ENCODE measurements at regions of chr1 and their contacts with region 1.

Region 1: GRCh38 chr1:30515755-30516484 is 207.5 kb downstream of the MATN1 start:
- DNase-seq: peak in 1 of 2 donors; percentile 3
- H3K4me3 ChIP-seq: no peak overlapping the region
- H3K27ac ChIP-seq: no peak overlapping the region
- H3K4me1 ChIP-seq: no peaks in the 10 kb centered on the region
- H3K27me3 ChIP-seq: no peaks in the 10 kb centered on the region
- CTCF ChIP-seq: no peak
- POLR2A ChIP-seq: no peak

Region 2: GRCh38 chr1:30225357-30225756 is 290.6 kb before region 1 on chr1:
- intact Hi-C with region 1: no loop called
- DNase-seq: no peak
- H3K4me3 ChIP-seq: no peak overlapping the region
- H3K27ac ChIP-seq: no peak overlapping the region
- H3K4me1 ChIP-seq: no peaks in the 10 kb centered on the region
- H3K27me3 ChIP-seq: no peaks in the 10 kb centered on the region
- CTCF ChIP-seq: no peak
- POLR2A ChIP-seq: no peak

Region 3: DNA sequence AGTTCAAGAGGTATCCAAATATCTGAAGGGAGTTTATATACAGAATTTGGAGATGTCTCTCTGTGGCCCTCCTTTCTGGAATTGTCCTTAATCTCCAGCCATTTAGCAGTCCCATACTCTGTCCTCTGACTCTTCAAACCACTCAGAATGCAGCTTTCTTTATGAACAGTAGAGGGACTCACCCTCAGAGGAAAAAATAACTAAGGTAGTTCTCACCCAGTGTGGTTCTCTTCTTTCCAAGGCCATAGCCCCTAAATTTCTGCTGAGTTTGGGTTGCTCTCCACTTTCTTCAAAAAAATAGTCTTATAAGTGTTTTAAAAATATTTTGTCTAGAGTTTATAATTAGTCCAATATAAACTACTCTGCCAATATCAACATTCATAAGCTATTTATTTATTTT is 162.3 kb before region 1 on chr1:
- intact Hi-C with region 1: no loop called
- DNase-seq: no peak
- H3K4me3 ChIP-seq: no peak overlapping the region
- H3K27ac ChIP-seq: no peak overlapping the region
- H3K4me1 ChIP-seq: no peaks in the 10 kb centered on the region
- H3K27me3 ChIP-seq: no peaks in the 10 kb centered on the region
- CTCF ChIP-seq: no peak
- POLR2A ChIP-seq: no peak

Region 4: DNA sequence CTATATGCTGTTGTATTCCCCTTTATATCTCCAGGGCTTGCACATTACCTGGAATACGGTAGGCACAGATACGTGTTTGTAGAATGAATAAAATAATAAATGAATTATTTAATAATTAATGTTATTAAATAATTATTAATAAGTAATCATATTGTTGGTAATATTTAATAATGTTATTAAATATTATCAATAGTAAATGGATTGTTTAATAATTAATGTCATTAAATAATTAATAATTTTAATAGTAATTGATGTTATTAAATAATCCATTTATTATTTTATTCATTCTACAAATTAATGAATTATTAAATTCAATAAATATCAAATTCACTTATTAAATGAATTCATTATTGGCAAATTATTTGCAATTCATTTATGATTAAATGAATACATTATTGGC is 32.4 kb after region 1 on chr1:
- intact Hi-C with region 1: loop called (anchors 2 kb)
- DNase-seq: no peak
- H3K4me3 ChIP-seq: no peak overlapping the region
- H3K27ac ChIP-seq: no peak overlapping the region
- H3K4me1 ChIP-seq: no peaks in the 10 kb centered on the region
- H3K27me3 ChIP-seq: no peaks in the 10 kb centered on the region
- CTCF ChIP-seq: no peak
- POLR2A ChIP-seq: no peak

Measured in breast epithelium (tissue), 4 donors.